OCI-LY7 (cell line): ENCODE measurements at regions of chr13 and their contacts with region 1.

Region 1: DNA sequence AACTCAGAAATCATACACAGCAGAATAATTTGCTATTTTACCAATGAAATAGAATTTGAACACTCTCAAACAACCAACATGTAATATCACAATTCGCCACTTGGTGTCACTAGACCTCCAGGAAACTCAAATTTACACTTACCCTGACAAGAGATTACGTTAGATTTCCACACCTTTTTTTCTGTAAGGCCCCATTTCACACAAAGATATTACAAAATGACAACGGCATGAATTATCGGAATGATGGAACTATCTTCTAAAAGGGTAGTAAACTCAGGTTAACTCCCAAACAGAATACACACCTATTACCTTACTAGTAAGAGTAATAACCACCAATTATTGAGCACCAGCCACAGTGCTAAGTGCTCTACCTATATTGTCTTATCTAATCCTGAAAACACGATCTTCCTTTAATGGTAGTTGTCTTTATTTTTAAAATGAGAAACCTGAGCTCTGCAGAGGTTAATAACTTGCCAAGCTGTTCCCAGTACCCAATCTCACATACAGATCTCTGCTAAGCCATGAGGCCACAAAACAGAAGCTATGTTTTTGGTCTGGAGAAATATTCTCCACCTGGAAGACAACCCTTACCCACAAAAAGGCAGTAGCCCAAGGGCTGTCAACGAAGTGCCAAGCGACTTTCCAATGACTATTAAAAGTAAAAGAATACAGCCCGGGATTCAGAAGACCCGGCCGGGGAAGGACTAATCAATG is 152.4 kb downstream of the DCLK1 start:
- DNase-seq: peak; percentile 20
- H3K4me3 ChIP-seq: no peak overlapping the region
- H3K27ac ChIP-seq: no peak overlapping the region
- H3K4me1 ChIP-seq: no peaks in the 10 kb centered on the region
- CTCF ChIP-seq: peak; percentile 88

Region 2: DNA sequence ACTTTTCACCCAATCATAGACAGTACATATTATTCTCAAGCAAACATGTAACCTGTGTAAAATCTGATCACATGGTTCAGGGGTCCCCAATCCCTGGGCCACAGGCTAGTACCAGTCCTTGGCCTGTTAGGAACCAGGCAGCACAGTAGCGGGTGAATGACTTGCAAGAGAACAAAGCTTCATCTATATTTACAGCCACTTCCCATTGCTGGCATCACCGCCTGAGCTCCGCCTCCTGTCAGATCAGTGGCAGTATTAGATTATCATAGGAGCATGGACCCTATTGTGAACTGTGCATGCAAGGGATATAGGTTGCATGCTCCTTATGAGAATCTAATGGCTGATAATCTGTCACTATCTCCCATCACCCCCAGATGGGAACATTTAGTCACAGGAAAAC is 635.3 kb before region 1 on chr13:
- CTCF ChIA-PET with region 1: no interaction called
- POLR2A ChIA-PET with region 1: no interaction called
- intact Hi-C with region 1: no loop called
- DNase-seq: no peak
- H3K4me3 ChIP-seq: no peak overlapping the region
- H3K27ac ChIP-seq: no peak overlapping the region
- H3K4me1 ChIP-seq: no peaks in the 10 kb centered on the region
- CTCF ChIP-seq: no peak

Region 3: GRCh38 chr13:36174923-36175322 is 196.2 kb after region 1 on chr13:
- CTCF ChIA-PET with region 1: no interaction called
- POLR2A ChIA-PET with region 1: no interaction called
- intact Hi-C with region 1: no loop called
- DNase-seq: no peak
- H3K4me3 ChIP-seq: no peak overlapping the region
- H3K27ac ChIP-seq: no peak overlapping the region
- H3K4me1 ChIP-seq: no peaks in the 10 kb centered on the region
- CTCF ChIP-seq: no peak

Region 4: DNA sequence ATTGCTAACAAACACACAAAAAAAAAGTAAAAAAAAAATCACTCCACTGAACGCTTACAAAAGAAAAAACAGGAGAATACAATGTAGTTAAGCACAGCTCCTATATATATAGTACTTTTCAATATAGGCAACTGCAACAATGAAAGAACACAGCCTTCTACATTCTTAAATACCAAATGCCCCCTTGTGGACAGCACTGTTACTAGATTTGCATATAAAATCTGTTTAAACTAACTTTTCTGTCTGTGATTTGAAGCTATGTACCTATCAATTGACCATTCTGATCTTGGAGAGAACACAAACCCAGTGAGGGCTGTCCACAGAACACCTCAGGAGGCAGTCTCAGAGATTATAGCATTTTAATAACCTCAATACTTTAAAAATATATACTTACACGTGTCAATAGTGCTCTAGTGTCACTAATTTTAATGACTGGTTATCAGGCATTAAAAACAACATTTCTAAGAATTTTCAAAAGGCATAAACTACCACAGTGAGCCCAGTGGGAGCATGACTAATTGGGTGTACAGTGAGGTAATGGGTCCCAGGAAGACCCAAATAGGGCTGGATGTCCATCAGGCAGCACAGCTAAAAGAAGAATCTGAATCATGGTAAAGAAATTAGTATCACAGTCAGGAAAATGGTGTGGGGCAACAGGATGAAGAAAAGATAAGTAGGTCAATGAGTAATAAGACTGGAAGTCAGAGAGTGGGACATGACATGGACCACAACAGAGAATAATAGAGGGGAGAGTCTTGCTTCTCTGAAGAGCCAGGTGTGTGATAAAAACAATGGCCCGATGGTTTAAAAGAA is 296.6 kb after region 1 on chr13:
- CTCF ChIA-PET with region 1: no interaction called
- POLR2A ChIA-PET with region 1: no interaction called
- intact Hi-C with region 1: loop called (anchors 5 kb)
- DNase-seq: peak; percentile 35
- H3K4me3 ChIP-seq: no peak overlapping the region
- H3K27ac ChIP-seq: no peak overlapping the region
- H3K4me1 ChIP-seq: no peaks in the 10 kb centered on the region
- CTCF ChIP-seq: peak; percentile 73